ENCODE measurements at regions of chr11 and their contacts with region 1.

Region 1: DNA sequence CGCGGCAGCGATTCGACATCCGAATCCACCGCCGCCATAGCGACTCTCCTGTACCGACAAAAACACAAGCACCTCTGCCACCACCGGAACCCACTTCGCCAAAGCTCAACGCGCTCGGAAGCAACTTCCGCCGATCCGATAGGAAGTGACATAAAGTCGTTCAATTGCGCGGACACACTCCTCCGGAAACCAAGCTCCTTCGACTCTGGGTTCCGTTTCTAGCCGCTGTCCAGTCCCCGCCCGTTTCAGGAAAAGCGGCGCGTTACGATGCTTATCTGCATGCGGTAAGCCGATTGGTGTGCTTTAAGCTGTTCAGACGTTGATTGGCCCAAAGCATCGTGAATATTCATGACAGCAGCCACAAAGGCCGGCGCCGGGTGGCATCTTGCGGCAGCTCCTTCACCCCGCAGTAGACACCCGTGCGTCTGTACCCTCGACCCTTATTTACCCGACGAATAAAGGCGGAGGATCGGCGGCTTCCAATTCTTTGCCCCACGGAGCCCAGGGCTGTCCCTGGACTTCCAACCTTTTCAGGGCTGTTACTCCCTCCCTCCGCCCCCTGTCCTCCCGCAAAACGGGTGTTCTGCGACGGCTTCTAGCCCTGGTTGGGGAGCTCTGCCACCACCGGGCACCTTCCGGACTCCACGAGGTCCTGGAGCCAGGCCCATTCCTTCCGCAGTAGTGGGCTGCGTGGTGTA is at the start of gene TUT1:
- DNase-seq: peak; percentile 94
- H3K4me3 Mint-ChIP-seq: peak within 1 kb of the TSS; percentile 92
- H3K27ac Mint-ChIP-seq: peak within 1 kb of the TSS; percentile 71
- H3K4me1 Mint-ChIP-seq: no peaks in the 10 kb centered on the region
- H3K27me3 Mint-ChIP-seq: no peaks in the 10 kb centered on the region
- CTCF ChIP-seq: no peak
- total RNA-seq, gene TUT1: 21.9 and 26.3 TPM in 2 replicates

Region 2: GRCh38 chr11:62573592-62574362 is 17.8 kb before region 1 on chr11 and contains the start of gene EEF1G:
- CTCF ChIA-PET with region 1: interaction called, 11 read pairs
- intact Hi-C with region 1: no loop called
- DNase-seq: peak; percentile 98
- H3K4me3 Mint-ChIP-seq: peak within 1 kb of the TSS; percentile 96
- H3K27ac Mint-ChIP-seq: peak within 1 kb of the TSS; percentile 99
- H3K4me1 Mint-ChIP-seq: peaks cover 51% of the 10 kb centered on the region
- H3K27me3 Mint-ChIP-seq: no peaks in the 10 kb centered on the region
- CTCF ChIP-seq: no peak
- total RNA-seq, gene EEF1G: 970 and 1,189 TPM in 2 replicates